ENCODE measurements at regions of chr6 and their contacts with region 1.

Region 1: GRCh38 chr6:109879521-109879920 is 98.6 kb upstream of the GPR6 start:
- DNase-seq: no peak
- H3K4me3 ChIP-seq: peak overlapping the region in 1 of 3 donors; percentile 5
- H3K27ac ChIP-seq: peak overlapping the region; percentile 44 to 57
- H3K4me1 ChIP-seq: no peaks in the 10 kb centered on the region
- H3K27me3 ChIP-seq: no peaks in the 10 kb centered on the region
- CTCF ChIP-seq: no peak
- POLR2A ChIP-seq: no peak

Region 2: GRCh38 chr6:109816452-109817374 is 62.8 kb before region 1 on chr6:
- intact Hi-C with region 1: loop called (anchors 2 kb)
- DNase-seq: no peak
- H3K4me3 ChIP-seq: no peak overlapping the region
- H3K27ac ChIP-seq: no peak overlapping the region
- H3K4me1 ChIP-seq: no peaks in the 10 kb centered on the region
- H3K27me3 ChIP-seq: no peaks in the 10 kb centered on the region
- CTCF ChIP-seq: no peak
- POLR2A ChIP-seq: no peak

Region 3: DNA sequence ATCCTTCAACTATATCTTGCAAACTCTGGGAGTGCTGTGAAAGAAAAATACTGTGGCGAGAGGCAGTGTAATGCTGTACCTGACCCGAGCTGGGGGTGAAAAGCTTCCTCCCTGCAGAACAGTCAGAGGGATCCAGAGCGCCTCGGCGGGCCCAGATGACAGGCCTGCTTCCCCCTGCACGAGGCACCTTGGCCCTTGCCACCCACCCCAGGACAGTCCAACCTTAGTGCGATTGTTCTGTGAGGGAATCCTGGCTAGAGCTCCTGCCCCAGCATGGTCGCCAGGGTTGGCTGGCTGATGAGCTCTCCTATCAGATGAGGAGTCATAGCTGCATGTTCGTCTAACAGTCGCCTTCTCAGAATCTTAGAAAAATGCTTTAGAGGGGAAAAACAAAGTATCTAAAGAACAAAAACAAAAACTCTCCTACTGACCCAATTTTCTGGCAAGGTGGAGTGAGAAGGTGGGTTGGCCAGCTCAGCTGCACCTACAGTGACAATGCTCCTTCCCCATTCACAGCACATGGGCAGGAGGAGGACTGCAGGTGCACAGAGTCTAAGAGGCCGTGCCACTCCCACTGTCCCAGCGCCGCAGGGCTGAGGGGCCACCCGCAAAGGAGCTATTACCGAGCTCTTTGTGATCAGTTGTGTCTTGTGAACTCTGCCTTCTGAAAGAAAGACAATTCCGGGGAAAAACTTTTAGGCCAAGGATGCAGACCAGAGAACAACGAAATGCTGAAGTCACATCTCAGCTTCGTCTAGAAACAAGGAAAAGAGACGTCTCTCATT is 70.0 kb after region 1 on chr6:
- intact Hi-C with region 1: no loop called
- DNase-seq: no peak
- H3K4me3 ChIP-seq: no peak overlapping the region
- H3K27ac ChIP-seq: no peak overlapping the region
- H3K4me1 ChIP-seq: no peaks in the 10 kb centered on the region
- H3K27me3 ChIP-seq: peaks cover 0 to 4% of the 10 kb centered on the region in 2 donors
- CTCF ChIP-seq: no peak
- POLR2A ChIP-seq: no peak